ENCODE measurements at regions of chr2 and their contacts with region 1.

Region 1: GRCh38 chr2:112996635-112997034 is 8.6 kb upstream of the IL36A start:
- DNase-seq: peak; percentile 86
- ATAC-seq: peak; percentile 98
- H3K4me3 Mint-ChIP-seq: peak overlapping the region; percentile 13
- H3K27ac Mint-ChIP-seq: peak overlapping the region; percentile 47
- H3K4me1 Mint-ChIP-seq: peaks cover 34% of the 10 kb centered on the region
- H3K27me3 Mint-ChIP-seq: no peaks in the 10 kb centered on the region
- CTCF ChIP-seq: no peak

Region 2: DNA sequence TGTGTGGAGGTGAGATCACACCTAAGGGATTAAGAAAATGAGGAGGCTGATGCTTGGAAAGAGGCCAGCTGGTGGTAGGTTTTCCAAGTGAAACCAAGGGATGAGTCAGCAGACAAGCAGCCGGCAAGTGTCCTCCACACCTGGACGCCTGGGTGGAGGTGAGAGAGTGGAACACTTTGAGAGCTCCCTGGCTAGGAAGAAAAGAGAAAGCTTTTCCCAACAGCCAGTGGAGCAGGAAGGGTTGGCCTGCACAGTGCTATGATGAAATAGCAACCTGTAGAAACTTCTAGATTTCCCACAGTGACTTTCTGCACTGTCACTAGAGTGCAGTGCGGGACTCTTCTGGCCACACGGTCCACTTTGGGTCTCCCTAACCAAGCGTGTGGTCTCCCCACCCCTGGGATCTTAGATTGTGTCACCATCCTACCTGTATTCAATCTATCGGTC is 105.2 kb before region 1 on chr2:
- CTCF ChIA-PET with region 1: no interaction called
- POLR2A ChIA-PET with region 1: no interaction called
- intact Hi-C with region 1: no loop called
- DNase-seq: no peak
- ATAC-seq: no peak
- H3K4me3 Mint-ChIP-seq: no peak overlapping the region
- H3K27ac Mint-ChIP-seq: no peak overlapping the region
- H3K4me1 Mint-ChIP-seq: no peaks in the 10 kb centered on the region
- H3K27me3 Mint-ChIP-seq: no peaks in the 10 kb centered on the region
- CTCF ChIP-seq: no peak

Region 3: DNA sequence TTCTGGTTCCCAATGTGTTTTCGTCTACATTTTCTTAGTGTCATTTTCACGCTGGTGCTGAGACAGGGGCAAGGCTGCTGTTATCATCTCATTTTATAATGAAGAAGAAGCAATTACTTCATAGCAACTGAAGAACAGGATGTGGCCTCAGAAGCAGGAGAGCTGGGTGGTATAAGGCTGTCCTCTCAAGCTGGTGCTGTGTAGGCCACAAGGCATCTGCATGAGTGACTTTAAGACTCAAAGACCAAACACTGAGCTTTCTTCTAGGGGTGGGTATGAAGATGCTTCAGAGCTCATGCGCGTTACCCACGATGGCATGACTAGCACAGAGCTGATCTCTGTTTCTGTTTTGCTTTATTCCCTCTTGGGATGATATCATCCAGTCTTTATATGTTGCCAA is 11.5 kb before region 1 on chr2:
- CTCF ChIA-PET with region 1: interaction called, 6 read pairs
- POLR2A ChIA-PET with region 1: interaction called, 12 read pairs
- intact Hi-C with region 1: no loop called
- DNase-seq: peak; percentile 68
- ATAC-seq: peak; percentile 96
- H3K4me3 Mint-ChIP-seq: no peak overlapping the region
- H3K27ac Mint-ChIP-seq: peak overlapping the region; percentile 68
- H3K4me1 Mint-ChIP-seq: peaks cover 28% of the 10 kb centered on the region
- H3K27me3 Mint-ChIP-seq: no peaks in the 10 kb centered on the region
- CTCF ChIP-seq: no peak

Region 4: GRCh38 chr2:113105047-113105785 is 108.6 kb after region 1 on chr2:
- CTCF ChIA-PET with region 1: no interaction called
- POLR2A ChIA-PET with region 1: no interaction called
- intact Hi-C with region 1: no loop called
- DNase-seq: peak; percentile 87
- ATAC-seq: peak; percentile 65
- H3K4me3 Mint-ChIP-seq: no peak overlapping the region
- H3K27ac Mint-ChIP-seq: peak overlapping the region; percentile 87
- H3K4me1 Mint-ChIP-seq: peaks cover 38% of the 10 kb centered on the region
- H3K27me3 Mint-ChIP-seq: no peaks in the 10 kb centered on the region
- CTCF ChIP-seq: no peak

Measured in activated CD8-positive, alpha-beta T cell treated with anti-CD3 and anti-CD28 coated beads for 36 hours (primary cell).